HepG2 (cell line): ENCODE measurements at regions of chr17 and their contacts with region 1.

Region 1: GRCh38 chr17:82346342-82347300 is 12.4 kb upstream of the TEX19 start:
- DNase-seq: peak; percentile 100
- ATAC-seq: peak; percentile 24
- H3K4me3 ChIP-seq: no peak overlapping the region; a peak in 1 of 6 replicates
- H3K27ac ChIP-seq: peak overlapping the region; percentile 83
- H3K4me1 ChIP-seq: peaks cover 94% of the 10 kb centered on the region
- H3K27me3 ChIP-seq: no peaks in the 10 kb centered on the region
- CTCF ChIP-seq: peak; percentile 20; the same call in 1 of the 2 replicates
- EP300 ChIP-seq: peak; percentile 90 to 98
- POLR2A ChIP-seq: peak; percentile 52 to 78; a peak in 3 of 4 replicates
- RAD21 ChIP-seq: peak; percentile 68

Region 2: DNA sequence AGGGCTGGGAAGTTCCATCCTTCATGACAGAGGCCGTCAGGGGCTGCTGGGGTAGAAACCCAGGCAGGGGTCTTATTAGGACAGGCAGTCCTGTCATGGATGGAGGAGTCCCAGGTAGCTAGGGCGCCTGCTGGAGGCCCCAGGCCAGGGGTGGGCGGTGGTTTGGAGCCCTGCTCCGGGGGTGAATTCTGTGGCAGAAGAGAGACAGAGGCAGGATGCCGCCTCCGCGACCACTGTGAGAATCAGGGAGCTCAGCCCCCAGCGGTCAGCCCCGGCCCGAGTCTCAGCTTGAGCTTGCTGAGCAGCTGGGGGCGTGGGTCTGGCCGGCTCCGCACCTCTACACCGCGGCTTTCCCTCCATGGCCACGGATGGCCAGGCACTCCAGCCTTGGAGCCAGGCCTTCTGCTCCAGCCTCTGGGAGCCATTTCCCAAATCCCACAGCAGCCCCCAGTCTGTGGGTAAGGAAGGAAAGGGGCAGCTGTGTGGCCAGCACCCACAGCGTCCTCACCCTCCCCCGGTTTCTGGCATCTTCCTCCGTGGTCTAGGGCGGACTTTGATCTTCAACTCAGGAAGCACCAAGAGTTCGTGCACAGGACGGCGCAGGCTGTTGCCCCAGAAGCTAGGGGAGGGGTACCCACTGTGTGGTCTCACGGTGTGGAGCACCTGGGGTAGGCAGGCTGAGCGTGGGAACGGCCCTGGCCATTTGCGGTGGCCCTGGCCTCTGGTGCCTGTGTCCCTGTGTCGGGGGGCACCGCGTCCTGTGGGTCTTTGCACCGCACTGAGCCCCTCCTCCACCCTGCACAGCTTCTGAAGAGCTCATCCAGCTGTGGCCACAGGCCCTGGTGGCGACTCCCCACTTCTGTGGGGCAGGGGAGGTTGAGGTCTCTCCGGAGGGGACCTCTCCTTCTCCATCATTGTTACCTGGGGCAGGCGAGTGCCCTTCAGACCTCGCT is 43.4 kb before region 1 on chr17:
- CTCF ChIA-PET with region 1: no interaction called
- POLR2A ChIA-PET with region 1: interaction called, 73 read pairs
- in situ Hi-C with region 1: no loop called
- intact Hi-C with region 1: loop called (anchors 2 kb)
- DNase-seq: no peak
- ATAC-seq: peak; percentile 35
- H3K4me3 ChIP-seq: peak overlapping the region in 2 of 3 experiments; percentile 42 to 59; a peak in 3 of 6 replicates
- H3K27ac ChIP-seq: no peak overlapping the region
- H3K4me1 ChIP-seq: peaks cover 78% of the 10 kb centered on the region
- H3K27me3 ChIP-seq: no peaks in the 10 kb centered on the region
- CTCF ChIP-seq: no peak
- EP300 ChIP-seq: 0 out of 4 replicates have a peak, but pooled peaks of 1 of the 2 experiments have one; percentile 7
- POLR2A ChIP-seq: no peak
- RAD21 ChIP-seq: 0 out of 2 replicates have a peak, but pooled peaks have one; percentile 20

Region 3: GRCh38 chr17:82358465-82359350 is 12.1 kb after region 1 on chr17 and contains the start of gene TEX19:
- CTCF ChIA-PET with region 1: no interaction called
- POLR2A ChIA-PET with region 1: interaction called, 34 read pairs
- in situ Hi-C with region 1: no loop called
- intact Hi-C with region 1: no loop called
- DNase-seq: no peak
- ATAC-seq: peak; percentile 19; the same call in 2 of the 3 replicates
- H3K4me3 ChIP-seq: no peak within 1 kb of the TSS
- H3K27ac ChIP-seq: no peak within 1 kb of the TSS
- H3K4me1 ChIP-seq: peaks cover 62% of the 10 kb centered on the region
- H3K27me3 ChIP-seq: no peaks in the 10 kb centered on the region
- CTCF ChIP-seq: peak; percentile 53
- EP300 ChIP-seq: no peak
- POLR2A ChIP-seq: 0 out of 4 replicates have a peak, but pooled peaks of 1 of the 2 experiments have one; percentile 22
- RAD21 ChIP-seq: no peak
- total RNA-seq, gene TEX19: 1.3 and 1.8 TPM in 2 replicates

Region 4: GRCh38 chr17:82412535-82413520 is 66.2 kb after region 1 on chr17:
- CTCF ChIA-PET with region 1: interaction called, 41 read pairs
- POLR2A ChIA-PET with region 1: interaction called, 8 read pairs
- in situ Hi-C with region 1: loop called (anchors 5 kb)
- intact Hi-C with region 1: loop called (anchors 2 kb)
- DNase-seq: peak; percentile 86
- ATAC-seq: peak; percentile 73
- H3K4me3 ChIP-seq: no peak overlapping the region
- H3K27ac ChIP-seq: peak overlapping the region; percentile 17
- H3K4me1 ChIP-seq: peaks cover 33% of the 10 kb centered on the region
- H3K27me3 ChIP-seq: no peaks in the 10 kb centered on the region
- CTCF ChIP-seq: peak; percentile 29; the same call in 1 of the 2 replicates
- EP300 ChIP-seq: peak in 1 of 2 experiments; percentile 56; a peak in 2 of 4 replicates
- POLR2A ChIP-seq: no peak
- RAD21 ChIP-seq: no peak